GM12878 (cell line): ENCODE measurements at regions of chr1 and their contacts with region 1.

Region 1: DNA sequence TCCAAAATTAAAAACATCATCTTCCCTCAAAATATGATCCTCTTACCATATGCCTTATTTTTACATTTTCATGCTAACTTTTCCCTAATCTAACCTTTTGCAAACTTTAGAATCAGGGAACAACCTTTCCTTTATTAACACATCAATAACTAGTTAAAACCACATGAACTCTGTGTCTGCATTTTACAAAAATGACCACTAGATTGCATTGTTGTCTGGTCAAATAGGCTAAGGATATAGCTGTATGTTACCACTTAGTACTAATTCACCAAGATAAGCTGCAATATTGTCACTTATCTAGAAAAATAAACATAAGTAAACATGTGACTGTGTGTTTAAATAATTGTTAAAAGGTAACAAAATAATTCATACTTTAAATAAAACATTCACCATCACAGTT is 82.3 kb downstream of the DENND1B start:
- DNase-seq: no peak
- ATAC-seq: peak; percentile 60; the same call in 2 of the 3 replicates
- H3K4me3 ChIP-seq: no peak overlapping the region
- H3K27ac ChIP-seq: no peak overlapping the region
- H3K4me1 ChIP-seq: no peaks in the 10 kb centered on the region
- H3K27me3 ChIP-seq: no peaks in the 10 kb centered on the region
- CTCF ChIP-seq: peak in 2 of 3 experiments; percentile 36 to 42; a peak in 2 of 6 replicates
- EP300 ChIP-seq: no peak
- POLR2A ChIP-seq: no peak
- RAD21 ChIP-seq: peak; percentile 68

Region 2: GRCh38 chr1:197464044-197464443 is 228.9 kb before region 1 on chr1:
- CTCF ChIA-PET with region 1: no interaction called
- POLR2A ChIA-PET with region 1: no interaction called
- RAD21 ChIA-PET with region 1: no interaction called
- SMC1A ChIA-PET with region 1: no interaction called
- in situ Hi-C with region 1: no loop called
- intact Hi-C with region 1: no loop called
- DNase-seq: no peak
- ATAC-seq: no peak
- H3K4me3 ChIP-seq: no peak overlapping the region
- H3K27ac ChIP-seq: no peak overlapping the region
- H3K4me1 ChIP-seq: no peaks in the 10 kb centered on the region
- H3K27me3 ChIP-seq: no peaks in the 10 kb centered on the region
- CTCF ChIP-seq: no peak
- EP300 ChIP-seq: no peak
- POLR2A ChIP-seq: no peak
- RAD21 ChIP-seq: no peak

Region 3: DNA sequence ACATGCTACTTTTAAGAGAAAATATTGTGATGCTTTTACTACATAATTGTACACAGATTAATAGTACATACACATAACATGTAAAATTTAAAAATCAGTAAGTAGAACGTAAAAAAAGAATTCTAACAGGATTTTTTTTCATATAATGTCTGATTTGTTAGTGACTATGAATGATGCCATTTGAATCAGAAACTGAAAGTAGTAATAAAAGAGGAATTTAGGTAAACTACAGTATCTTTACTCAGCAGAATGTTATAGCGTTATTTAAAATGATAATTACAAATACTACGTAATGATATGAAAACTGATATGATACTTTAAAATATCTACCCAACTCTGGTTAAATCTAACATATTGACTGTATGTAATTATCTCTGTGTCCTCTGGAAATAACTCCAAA is 33.8 kb before region 1 on chr1:
- CTCF ChIA-PET with region 1: no interaction called
- POLR2A ChIA-PET with region 1: no interaction called
- RAD21 ChIA-PET with region 1: no interaction called
- SMC1A ChIA-PET with region 1: no interaction called
- in situ Hi-C with region 1: no loop called
- intact Hi-C with region 1: no loop called
- DNase-seq: no peak
- ATAC-seq: peak; percentile 44; the same call in 1 of the 3 replicates
- H3K4me3 ChIP-seq: no peak overlapping the region
- H3K27ac ChIP-seq: no peak overlapping the region
- H3K4me1 ChIP-seq: no peaks in the 10 kb centered on the region
- H3K27me3 ChIP-seq: no peaks in the 10 kb centered on the region
- CTCF ChIP-seq: no peak
- EP300 ChIP-seq: no peak
- POLR2A ChIP-seq: no peak
- RAD21 ChIP-seq: no peak

Region 4: GRCh38 chr1:197705941-197706340 is 13.0 kb after region 1 on chr1:
- CTCF ChIA-PET with region 1: interaction called, 4 read pairs
- POLR2A ChIA-PET with region 1: no interaction called
- RAD21 ChIA-PET with region 1: interaction called, 3 read pairs
- SMC1A ChIA-PET with region 1: interaction called, 11 read pairs
- in situ Hi-C with region 1: no loop called
- intact Hi-C with region 1: no loop called
- DNase-seq: no peak
- ATAC-seq: no peak
- H3K4me3 ChIP-seq: no peak overlapping the region
- H3K27ac ChIP-seq: no peak overlapping the region
- H3K4me1 ChIP-seq: no peaks in the 10 kb centered on the region
- H3K27me3 ChIP-seq: no peaks in the 10 kb centered on the region
- CTCF ChIP-seq: no peak
- EP300 ChIP-seq: no peak
- POLR2A ChIP-seq: no peak
- RAD21 ChIP-seq: no peak